ENCODE measurements at regions of chr6 and their contacts with region 1.

Region 1: DNA sequence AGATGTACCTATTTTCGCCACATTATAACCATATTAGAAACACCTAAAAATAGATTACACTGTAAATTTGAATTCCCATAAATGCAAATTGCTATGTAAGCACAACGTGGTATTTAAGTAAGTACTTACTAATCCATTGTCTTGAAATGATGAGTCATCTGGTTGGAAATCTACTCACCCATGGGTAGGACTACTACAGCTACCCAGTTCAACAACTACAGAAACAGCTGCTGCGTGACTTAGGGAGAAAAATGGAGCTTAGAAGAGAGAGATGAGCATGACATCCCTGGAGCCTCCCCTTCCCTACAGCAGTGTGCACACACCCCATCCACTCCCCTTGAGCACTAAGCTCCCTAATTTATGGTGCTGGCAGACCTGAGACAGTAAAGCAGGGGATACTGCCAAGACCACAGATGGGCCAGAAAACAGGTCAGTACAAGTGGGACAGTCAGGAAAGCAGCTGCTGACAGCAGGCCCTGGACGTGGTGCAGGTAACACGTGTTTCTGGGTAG is 26.9 kb downstream of the RRAGD start:
- DNase-seq: no peak

Region 2: GRCh38 chr6:88013015-88013414 is 1372.2 kb before region 1 on chr6:
- intact Hi-C with region 1: loop called in 1 of 2 experiments (anchors 5 kb)
- DNase-seq: no peak

Region 3: GRCh38 chr6:89689732-89690131 is 304.5 kb after region 1 on chr6:
- intact Hi-C with region 1: no loop called
- DNase-seq: no peak